ENCODE measurements at regions of chr19 and their contacts with region 1.

Region 1: DNA sequence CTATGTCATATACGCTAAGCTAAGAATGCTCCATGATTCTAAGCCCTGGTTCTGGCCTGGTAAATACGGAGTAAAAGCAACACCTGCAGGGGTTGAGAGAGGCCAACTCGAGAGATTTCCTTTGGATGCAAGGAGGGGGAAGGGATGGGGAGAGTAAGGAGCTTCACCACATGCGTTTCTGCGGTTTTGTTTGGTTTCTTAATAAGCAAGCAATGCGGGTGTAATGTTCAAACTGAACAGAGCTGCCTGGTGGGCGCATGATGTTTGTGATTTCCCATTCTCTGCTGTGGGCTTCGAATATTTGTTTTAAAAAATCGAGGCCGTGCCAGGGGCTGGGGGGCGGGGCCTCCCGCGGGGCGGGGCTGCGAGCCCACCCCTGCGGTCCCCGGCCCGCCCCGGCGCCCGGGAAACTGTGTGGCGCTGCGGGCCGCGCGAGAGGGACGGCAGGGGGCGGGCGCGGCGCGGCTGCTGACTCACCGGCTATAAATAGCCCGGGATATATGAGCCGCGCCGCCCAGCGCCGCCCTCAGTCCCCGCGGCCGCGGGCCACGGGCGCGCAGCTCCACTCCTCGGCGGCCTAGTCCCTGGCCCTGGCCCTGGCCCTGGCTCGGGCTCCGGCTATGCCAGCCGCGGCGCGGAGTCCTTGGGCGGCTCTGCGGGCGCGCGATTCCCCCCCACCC is 5.1 kb downstream of the BBC3 start:
- DNase-seq: peak; percentile 81 to 91 (median 86)
- ATAC-seq: peak; percentile 55 to 62
- H3K4me3 Mint-ChIP-seq: peak overlapping the region in 9 of 10 donors; percentile 61 to 89 (median 75)
- H3K27ac Mint-ChIP-seq: peak overlapping the region; percentile 6 to 94 (median 88)
- H3K4me1 Mint-ChIP-seq: peaks cover 6 to 21% (median 12%) of the 10 kb centered on the region in 4 donors
- H3K27me3 Mint-ChIP-seq: no peaks in the 10 kb centered on the region

Region 2: DNA sequence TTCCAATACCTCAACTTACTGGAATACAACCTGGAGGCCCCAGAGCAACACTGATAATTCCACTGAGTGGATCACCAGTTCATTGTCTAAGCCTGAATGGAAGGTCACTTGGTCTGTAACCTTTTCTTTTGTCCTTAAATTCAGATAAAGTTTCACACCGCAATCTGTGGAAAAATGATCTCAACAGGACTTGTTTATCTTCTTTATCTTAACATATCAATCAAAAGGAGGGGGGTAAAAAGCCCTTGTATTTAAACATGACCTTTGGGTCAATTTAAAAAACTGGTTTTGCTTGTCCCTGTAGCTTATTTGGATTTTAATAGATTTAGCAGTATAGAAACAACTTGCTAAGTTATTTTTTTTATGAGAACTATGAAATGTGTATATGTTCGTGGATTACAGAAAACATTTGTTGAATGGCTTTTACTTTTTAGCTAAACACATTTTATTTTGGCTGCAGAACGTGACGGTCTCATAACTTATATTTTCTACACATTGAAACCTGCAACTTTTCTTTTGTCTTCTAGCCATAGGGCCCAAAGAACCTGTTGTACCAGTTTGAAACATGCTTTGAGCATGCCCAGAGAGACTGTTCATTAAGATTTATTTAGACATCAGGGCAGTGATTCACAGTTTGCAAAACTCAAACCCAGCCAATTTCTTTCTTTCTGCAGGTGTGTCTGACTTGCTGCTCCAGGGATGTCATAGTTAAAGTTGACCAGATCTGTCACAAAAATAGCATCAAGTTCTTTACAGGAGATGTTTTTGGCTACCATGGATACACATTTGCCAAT is 73.5 kb before region 1 on chr19:
- POLR2A ChIA-PET with region 1: interaction called, 46 read pairs
- DNase-seq: no peak
- ATAC-seq: no peak
- H3K4me3 Mint-ChIP-seq: no peak overlapping the region
- H3K27ac Mint-ChIP-seq: peak overlapping the region in 4 of 10 donors; percentile 21 to 69 (median 40)
- H3K4me1 Mint-ChIP-seq: peaks cover 16 to 71% (median 41%) of the 10 kb centered on the region in 4 donors
- H3K27me3 Mint-ChIP-seq: no peaks in the 10 kb centered on the region

Region 3: DNA sequence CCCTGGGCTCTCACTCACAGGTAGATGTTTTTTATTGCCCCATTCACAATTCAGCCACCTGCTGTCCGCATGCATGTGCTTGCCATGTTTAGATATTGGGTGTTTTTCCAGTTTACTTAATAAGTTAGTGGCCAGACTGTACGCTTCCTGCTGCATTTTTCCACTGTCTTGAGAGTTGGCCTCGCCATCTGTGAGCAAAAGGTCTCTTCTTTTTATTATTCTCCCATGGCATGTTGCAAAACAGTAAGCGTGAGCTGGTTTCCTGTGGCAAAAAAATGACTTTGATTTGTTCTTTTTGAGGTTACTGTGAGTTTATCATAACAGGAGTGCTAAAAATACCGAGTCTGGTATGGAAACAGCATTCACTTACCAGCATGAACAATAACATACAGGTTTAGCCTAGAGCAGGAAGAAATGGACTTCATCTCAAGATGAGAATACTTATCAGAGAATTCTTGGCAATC is 49.2 kb before region 1 on chr19:
- POLR2A ChIA-PET with region 1: interaction called, 21 read pairs
- DNase-seq: peak in 8 of 10 donors; percentile 22 to 81 (median 42)
- ATAC-seq: peak; percentile 84 to 94
- H3K4me3 Mint-ChIP-seq: peak overlapping the region; percentile 49 to 88 (median 81)
- H3K27ac Mint-ChIP-seq: peak overlapping the region; percentile 90 to 99 (median 94)
- H3K4me1 Mint-ChIP-seq: peaks cover 30 to 78% (median 65%) of the 10 kb centered on the region in 4 donors
- H3K27me3 Mint-ChIP-seq: no peaks in the 10 kb centered on the region

Region 4: GRCh38 chr19:47210689-47211316 is 15.1 kb before region 1 on chr19:
- POLR2A ChIA-PET with region 1: interaction called, 102 read pairs
- DNase-seq: peak; percentile 58 to 87 (median 78)
- ATAC-seq: peak; percentile 74 to 89
- H3K4me3 Mint-ChIP-seq: peak overlapping the region in 6 of 10 donors; percentile 5 to 46 (median 23)
- H3K27ac Mint-ChIP-seq: peak overlapping the region; percentile 7 to 86 (median 80)
- H3K4me1 Mint-ChIP-seq: peaks cover 8 to 29% (median 17%) of the 10 kb centered on the region in 4 donors
- H3K27me3 Mint-ChIP-seq: no peaks in the 10 kb centered on the region

Region 5: GRCh38 chr19:47273313-47273977 is 47.6 kb after region 1 on chr19:
- POLR2A ChIA-PET with region 1: interaction called, 13 read pairs
- DNase-seq: peak; percentile 80 to 94 (median 87)
- ATAC-seq: peak; percentile 69
- H3K4me3 Mint-ChIP-seq: peak overlapping the region; percentile 86 to 99 (median 97)
- H3K27ac Mint-ChIP-seq: peak overlapping the region; percentile 88 to 99 (median 98)
- H3K4me1 Mint-ChIP-seq: peaks cover 21 to 39% (median 27%) of the 10 kb centered on the region in 4 donors
- H3K27me3 Mint-ChIP-seq: no peaks in the 10 kb centered on the region